Dendritic cell treated with granulocyte-macrophage colony-stimulating factor and Interleukin-4, amounts not matched to agents 40 ng/mL and 50 ng/mL, for 4 days (primary cell): ENCODE measurements at regions of chr3 and their contacts with region 1.

Region 1: GRCh38 chr3:99842826-99843589 is 25.3 kb downstream of the CMSS1 start:
- H3K4me3 Mint-ChIP-seq: no peak overlapping the region
- H3K27ac Mint-ChIP-seq: no peak overlapping the region
- H3K4me1 Mint-ChIP-seq: peaks cover 23% of the 10 kb centered on the region
- H3K27me3 Mint-ChIP-seq: no peaks in the 10 kb centered on the region

Region 2: GRCh38 chr3:99794485-99794884 is 48.5 kb before region 1 on chr3:
- intact Hi-C with region 1: no loop called
- H3K4me3 Mint-ChIP-seq: no peak overlapping the region
- H3K27ac Mint-ChIP-seq: no peak overlapping the region
- H3K4me1 Mint-ChIP-seq: no peaks in the 10 kb centered on the region
- H3K27me3 Mint-ChIP-seq: no peaks in the 10 kb centered on the region

Region 3: GRCh38 chr3:99952306-99952705 is 109.3 kb after region 1 on chr3:
- intact Hi-C with region 1: no loop called
- H3K4me3 Mint-ChIP-seq: no peak overlapping the region
- H3K27ac Mint-ChIP-seq: no peak overlapping the region
- H3K4me1 Mint-ChIP-seq: peaks cover 15% of the 10 kb centered on the region
- H3K27me3 Mint-ChIP-seq: no peaks in the 10 kb centered on the region

Region 4: DNA sequence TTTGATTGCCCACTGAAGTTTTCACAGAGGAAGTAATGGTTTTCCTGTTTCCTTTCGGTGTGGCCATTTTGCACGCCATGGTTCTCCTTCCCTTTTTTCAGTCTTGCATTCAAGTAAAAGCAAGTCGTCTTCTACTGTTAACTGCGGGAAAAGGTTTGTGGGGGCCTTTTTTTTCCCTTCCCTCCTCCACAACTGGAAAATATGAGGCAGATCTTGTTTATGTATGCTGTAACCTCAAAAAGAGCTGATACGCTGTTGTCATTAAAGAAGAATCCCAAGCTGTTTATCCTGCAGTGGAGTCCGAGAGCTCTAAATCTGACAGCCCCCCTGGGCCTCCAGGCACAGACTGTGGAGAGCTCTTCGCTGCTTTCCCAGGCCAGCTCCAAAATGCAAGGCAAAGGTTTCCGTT is 230.9 kb after region 1 on chr3:
- intact Hi-C with region 1: loop called (anchors 5 kb)
- H3K4me3 Mint-ChIP-seq: peak overlapping the region; percentile 49
- H3K27ac Mint-ChIP-seq: peak overlapping the region; percentile 82
- H3K4me1 Mint-ChIP-seq: peaks cover 47% of the 10 kb centered on the region
- H3K27me3 Mint-ChIP-seq: peaks cover 1% of the 10 kb centered on the region